GM12878 (cell line): ENCODE measurements at regions of chr13 and their contacts with region 1.

Region 1: DNA sequence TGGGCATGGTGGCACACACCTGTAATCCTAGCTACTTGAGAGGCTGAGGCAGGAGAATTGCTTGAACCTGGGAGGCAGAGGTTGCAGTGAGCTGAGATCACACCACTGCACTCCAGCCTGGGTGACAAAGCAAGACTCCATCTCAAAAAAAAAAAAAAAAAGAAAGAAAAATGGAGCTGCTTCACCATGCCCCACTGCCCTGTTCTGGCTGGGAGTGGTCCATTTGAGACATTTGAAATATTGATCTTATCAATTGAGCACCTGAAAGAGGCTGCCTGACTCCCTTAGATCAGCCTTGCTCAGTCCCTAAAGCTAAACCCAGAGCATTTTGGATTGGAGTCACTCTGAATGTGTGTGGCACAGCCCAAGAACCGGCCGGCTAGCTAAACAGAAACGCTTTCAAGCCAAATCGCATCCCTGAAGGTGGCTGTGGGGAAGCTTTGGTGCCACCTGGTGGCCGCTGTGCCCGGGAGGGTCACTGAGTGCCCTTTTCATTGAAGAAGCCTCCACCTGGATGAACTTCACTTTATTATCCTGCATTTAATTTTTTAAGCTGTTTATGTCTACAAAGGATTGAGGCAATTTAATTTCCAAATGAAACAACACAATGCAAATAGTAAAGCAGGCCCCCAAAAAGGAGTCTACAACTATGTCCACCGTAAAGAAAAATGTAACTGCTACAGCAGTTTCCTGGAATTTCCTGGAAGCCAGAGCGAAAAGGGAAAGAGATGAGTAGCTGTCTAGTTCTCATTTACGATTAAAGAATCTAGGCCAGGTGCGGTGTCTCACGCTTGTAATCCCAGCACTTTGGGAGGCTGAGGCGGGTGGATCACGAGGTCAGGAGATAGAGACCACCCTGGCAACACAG is 53.1 kb upstream of the SERPINE3 start:
- DNase-seq: peak; percentile 7
- ATAC-seq: peak; percentile 98
- H3K4me3 ChIP-seq: no peak overlapping the region
- H3K27ac ChIP-seq: no peak overlapping the region
- H3K4me1 ChIP-seq: no peaks in the 10 kb centered on the region
- H3K27me3 ChIP-seq: no peaks in the 10 kb centered on the region; a peak in 1 of 4 replicates
- CTCF ChIP-seq: peak; percentile 86 to 94 (median 93)
- EP300 ChIP-seq: no peak
- POLR2A ChIP-seq: no peak
- RAD21 ChIP-seq: peak; percentile 85

Region 2: GRCh38 chr13:51134763-51135365 is 151.5 kb before region 1 on chr13:
- CTCF ChIA-PET with region 1: interaction called, 242 read pairs
- POLR2A ChIA-PET with region 1: no interaction called
- RAD21 ChIA-PET with region 1: interaction called, 131 read pairs
- SMC1A ChIA-PET with region 1: interaction called, 112 read pairs
- in situ Hi-C with region 1: no loop called
- intact Hi-C with region 1: no loop called
- DNase-seq: no peak
- ATAC-seq: no peak
- H3K4me3 ChIP-seq: no peak overlapping the region
- H3K27ac ChIP-seq: no peak overlapping the region
- H3K4me1 ChIP-seq: no peaks in the 10 kb centered on the region
- H3K27me3 ChIP-seq: peaks cover 0 to 2% of the 10 kb centered on the region in 2 experiments; a peak in 2 of 4 replicates
- CTCF ChIP-seq: no peak
- EP300 ChIP-seq: no peak
- POLR2A ChIP-seq: no peak
- RAD21 ChIP-seq: no peak

Region 3: GRCh38 chr13:51269039-51269438 is 17.3 kb before region 1 on chr13:
- CTCF ChIA-PET with region 1: interaction called, 21 read pairs
- POLR2A ChIA-PET with region 1: no interaction called
- RAD21 ChIA-PET with region 1: interaction called, 7 read pairs
- SMC1A ChIA-PET with region 1: interaction called, 5 read pairs
- in situ Hi-C with region 1: no loop called
- intact Hi-C with region 1: no loop called
- DNase-seq: no peak
- ATAC-seq: no peak
- H3K4me3 ChIP-seq: no peak overlapping the region
- H3K27ac ChIP-seq: no peak overlapping the region
- H3K4me1 ChIP-seq: no peaks in the 10 kb centered on the region
- H3K27me3 ChIP-seq: peaks cover 0 to 8% of the 10 kb centered on the region in 2 experiments; a peak in 1 of 4 replicates
- CTCF ChIP-seq: no peak
- EP300 ChIP-seq: no peak
- POLR2A ChIP-seq: no peak
- RAD21 ChIP-seq: no peak

Region 4: GRCh38 chr13:51297556-51297955 is 11.2 kb after region 1 on chr13:
- CTCF ChIA-PET with region 1: interaction called, 25 read pairs
- POLR2A ChIA-PET with region 1: no interaction called
- RAD21 ChIA-PET with region 1: interaction called, 9 read pairs
- SMC1A ChIA-PET with region 1: interaction called, 15 read pairs
- in situ Hi-C with region 1: no loop called
- intact Hi-C with region 1: no loop called
- DNase-seq: no peak
- ATAC-seq: peak; percentile 57; the same call in 2 of the 3 replicates
- H3K4me3 ChIP-seq: no peak overlapping the region
- H3K27ac ChIP-seq: no peak overlapping the region
- H3K4me1 ChIP-seq: no peaks in the 10 kb centered on the region
- H3K27me3 ChIP-seq: no peaks in the 10 kb centered on the region
- CTCF ChIP-seq: peak; percentile 7 to 24 (median 15); a peak in 1 of 6 replicates
- EP300 ChIP-seq: no peak
- POLR2A ChIP-seq: no peak
- RAD21 ChIP-seq: peak; percentile 41; the same call in 1 of the 2 replicates

Region 5: GRCh38 chr13:51311957-51312520 is 25.7 kb after region 1 on chr13:
- CTCF ChIA-PET with region 1: interaction called, 32 read pairs
- POLR2A ChIA-PET with region 1: no interaction called
- RAD21 ChIA-PET with region 1: interaction called, 4 read pairs
- SMC1A ChIA-PET with region 1: interaction called, 6 read pairs
- in situ Hi-C with region 1: no loop called
- intact Hi-C with region 1: no loop called
- DNase-seq: no peak
- ATAC-seq: no peak
- H3K4me3 ChIP-seq: no peak overlapping the region
- H3K27ac ChIP-seq: no peak overlapping the region
- H3K4me1 ChIP-seq: no peaks in the 10 kb centered on the region
- H3K27me3 ChIP-seq: peaks cover 0 to 3% of the 10 kb centered on the region in 2 experiments; a peak in 2 of 4 replicates
- CTCF ChIP-seq: no peak
- EP300 ChIP-seq: no peak
- POLR2A ChIP-seq: no peak
- RAD21 ChIP-seq: no peak

Region 6: DNA sequence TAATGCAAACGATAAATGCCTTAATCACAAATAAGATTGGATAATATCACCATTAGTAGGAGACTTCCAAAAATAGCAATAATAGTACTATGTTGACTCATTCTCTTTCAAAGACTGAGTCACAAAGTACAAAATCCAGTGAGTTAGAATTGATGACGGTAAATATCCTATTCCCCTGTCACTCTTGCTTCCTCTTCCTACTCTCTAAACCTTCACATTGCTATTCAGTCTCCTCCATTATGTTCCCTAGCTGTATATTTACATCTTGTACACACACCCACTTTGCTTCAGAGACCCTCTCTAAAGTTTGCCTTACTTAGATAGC is 192.8 kb after region 1 on chr13:
- CTCF ChIA-PET with region 1: no interaction called
- POLR2A ChIA-PET with region 1: no interaction called
- RAD21 ChIA-PET with region 1: no interaction called
- SMC1A ChIA-PET with region 1: no interaction called
- in situ Hi-C with region 1: no loop called
- intact Hi-C with region 1: no loop called
- DNase-seq: no peak
- ATAC-seq: peak; percentile 55
- H3K4me3 ChIP-seq: no peak overlapping the region
- H3K27ac ChIP-seq: no peak overlapping the region
- H3K4me1 ChIP-seq: no peaks in the 10 kb centered on the region
- H3K27me3 ChIP-seq: no peaks in the 10 kb centered on the region
- CTCF ChIP-seq: no peak
- EP300 ChIP-seq: no peak
- POLR2A ChIP-seq: no peak
- RAD21 ChIP-seq: no peak

Region 7: GRCh38 chr13:51874651-51875050 is 588.3 kb after region 1 on chr13:
- CTCF ChIA-PET with region 1: no interaction called
- POLR2A ChIA-PET with region 1: no interaction called
- RAD21 ChIA-PET with region 1: no interaction called
- SMC1A ChIA-PET with region 1: no interaction called
- in situ Hi-C with region 1: no loop called
- intact Hi-C with region 1: no loop called
- DNase-seq: no peak
- ATAC-seq: no peak
- H3K4me3 ChIP-seq: no peak overlapping the region
- H3K27ac ChIP-seq: no peak overlapping the region
- H3K4me1 ChIP-seq: no peaks in the 10 kb centered on the region
- H3K27me3 ChIP-seq: no peaks in the 10 kb centered on the region
- CTCF ChIP-seq: no peak
- EP300 ChIP-seq: no peak
- POLR2A ChIP-seq: no peak
- RAD21 ChIP-seq: no peak